ENCODE measurements at regions of chr22 and their contacts with region 1.

Region 1: DNA sequence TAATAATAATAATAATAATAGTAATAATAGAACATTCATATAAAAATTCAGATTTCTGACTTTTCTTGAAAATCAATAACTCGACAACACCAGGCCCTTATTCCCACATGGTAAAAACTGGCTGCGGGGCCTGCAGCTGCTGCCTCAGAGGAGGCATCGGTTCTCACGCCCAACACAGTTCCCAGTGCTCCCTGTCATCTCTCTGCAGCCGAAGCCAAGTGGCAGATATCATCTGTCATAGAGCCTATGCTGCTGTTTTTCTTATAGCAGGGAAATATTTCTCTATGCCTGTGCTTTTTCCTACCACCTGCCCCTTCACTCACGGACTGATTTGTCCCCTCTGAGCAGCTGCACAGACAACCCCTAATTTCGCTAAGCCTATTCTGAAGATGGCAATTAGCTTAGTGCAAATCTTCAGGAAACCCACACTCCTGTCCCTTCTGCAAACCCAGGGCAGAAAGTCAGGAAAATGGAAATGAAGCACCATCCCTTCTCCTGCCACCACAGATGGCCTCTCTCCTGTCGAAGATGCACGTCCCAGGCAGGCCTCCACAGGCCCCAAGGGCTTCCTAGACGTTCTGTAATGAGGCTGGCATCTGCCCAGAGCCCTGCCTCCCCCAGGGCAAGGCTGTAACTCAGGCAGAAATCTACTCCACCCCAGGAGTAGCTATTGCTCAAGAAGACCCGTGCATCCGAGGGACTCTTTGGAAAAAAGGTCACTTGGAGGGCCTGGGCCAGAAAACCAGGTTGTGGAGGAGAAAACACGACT is 66.6 kb downstream of the SYN3 start:
- DNase-seq: peak in 6 of 7 donors; percentile 31 to 67 (median 64)
- H3K4me3 ChIP-seq: no peak overlapping the region
- H3K27ac ChIP-seq: no peak overlapping the region
- H3K4me1 ChIP-seq: peaks cover 0 to 16% of the 10 kb centered on the region in 2 donors
- H3K27me3 ChIP-seq: no peaks in the 10 kb centered on the region
- CTCF ChIP-seq: no peak
- POLR2A ChIP-seq: no peak

Region 2: GRCh38 chr22:32528984-32529982 is 462.3 kb before region 1 on chr22:
- intact Hi-C with region 1: loop called in 1 of 2 experiments (anchors 10 kb)
- DNase-seq: peak; percentile 82 to 95 (median 90)
- H3K4me3 ChIP-seq: no peak overlapping the region
- H3K27ac ChIP-seq: peak overlapping the region in 4 of 5 donors; percentile 6 to 85 (median 34)
- H3K4me1 ChIP-seq: peaks cover 0 to 18% of the 10 kb centered on the region in 2 donors
- H3K27me3 ChIP-seq: no peaks in the 10 kb centered on the region
- CTCF ChIP-seq: peak; percentile 81 to 94 (median 88)
- POLR2A ChIP-seq: no peak

Region 3: DNA sequence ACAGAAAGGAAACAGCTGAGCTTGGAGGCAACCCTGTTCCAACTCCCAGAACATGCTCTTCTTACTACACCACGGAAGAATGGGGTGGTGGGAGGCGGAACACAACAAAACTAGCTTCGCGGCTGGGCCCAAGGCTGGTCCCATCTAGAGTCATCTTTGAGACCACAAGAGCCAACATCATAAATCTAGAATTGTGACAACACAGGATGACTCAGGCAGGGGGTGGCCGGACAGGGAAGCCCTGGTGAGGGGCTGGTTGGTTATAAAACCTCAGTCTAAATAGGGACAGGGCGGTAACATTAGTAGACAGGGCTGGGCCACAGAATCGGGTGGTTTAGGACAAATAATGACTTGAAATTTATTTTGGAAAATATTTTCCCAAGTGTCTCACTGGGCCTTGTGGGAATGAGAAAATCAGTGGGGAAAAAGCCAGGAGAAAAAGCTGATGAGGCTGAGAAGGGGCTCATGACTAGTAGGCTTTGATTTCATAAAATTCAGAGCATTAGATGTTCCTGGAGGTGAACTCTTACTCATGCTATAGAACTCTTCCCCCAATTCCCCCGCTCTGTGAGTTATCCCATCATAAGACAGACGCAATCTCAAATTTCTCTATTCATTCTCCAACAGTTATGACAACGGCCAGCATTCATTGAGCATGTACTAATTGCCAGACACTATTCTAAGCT is 341.9 kb before region 1 on chr22:
- intact Hi-C with region 1: loop called in 1 of 2 experiments (anchors 10 kb)
- DNase-seq: no peak
- H3K4me3 ChIP-seq: no peak overlapping the region
- H3K27ac ChIP-seq: peak overlapping the region in 1 of 5 donors; percentile 34
- H3K4me1 ChIP-seq: no peaks in the 10 kb centered on the region
- H3K27me3 ChIP-seq: no peaks in the 10 kb centered on the region
- CTCF ChIP-seq: no peak
- POLR2A ChIP-seq: no peak

Region 4: GRCh38 chr22:32695451-32695891 is 296.1 kb before region 1 on chr22:
- intact Hi-C with region 1: no loop called
- DNase-seq: no peak
- H3K4me3 ChIP-seq: no peak overlapping the region
- H3K27ac ChIP-seq: no peak overlapping the region
- H3K4me1 ChIP-seq: no peaks in the 10 kb centered on the region
- H3K27me3 ChIP-seq: no peaks in the 10 kb centered on the region
- CTCF ChIP-seq: no peak
- POLR2A ChIP-seq: no peak

Region 5: GRCh38 chr22:32796865-32797573 is 194.5 kb before region 1 on chr22:
- intact Hi-C with region 1: loop called (anchors 10 kb)
- DNase-seq: peak in 6 of 7 donors; percentile 62 to 83 (median 65)
- H3K4me3 ChIP-seq: no peak overlapping the region
- H3K27ac ChIP-seq: no peak overlapping the region
- H3K4me1 ChIP-seq: no peaks in the 10 kb centered on the region
- H3K27me3 ChIP-seq: no peaks in the 10 kb centered on the region
- CTCF ChIP-seq: peak; percentile 64 to 83 (median 80)
- POLR2A ChIP-seq: no peak

Region 6: DNA sequence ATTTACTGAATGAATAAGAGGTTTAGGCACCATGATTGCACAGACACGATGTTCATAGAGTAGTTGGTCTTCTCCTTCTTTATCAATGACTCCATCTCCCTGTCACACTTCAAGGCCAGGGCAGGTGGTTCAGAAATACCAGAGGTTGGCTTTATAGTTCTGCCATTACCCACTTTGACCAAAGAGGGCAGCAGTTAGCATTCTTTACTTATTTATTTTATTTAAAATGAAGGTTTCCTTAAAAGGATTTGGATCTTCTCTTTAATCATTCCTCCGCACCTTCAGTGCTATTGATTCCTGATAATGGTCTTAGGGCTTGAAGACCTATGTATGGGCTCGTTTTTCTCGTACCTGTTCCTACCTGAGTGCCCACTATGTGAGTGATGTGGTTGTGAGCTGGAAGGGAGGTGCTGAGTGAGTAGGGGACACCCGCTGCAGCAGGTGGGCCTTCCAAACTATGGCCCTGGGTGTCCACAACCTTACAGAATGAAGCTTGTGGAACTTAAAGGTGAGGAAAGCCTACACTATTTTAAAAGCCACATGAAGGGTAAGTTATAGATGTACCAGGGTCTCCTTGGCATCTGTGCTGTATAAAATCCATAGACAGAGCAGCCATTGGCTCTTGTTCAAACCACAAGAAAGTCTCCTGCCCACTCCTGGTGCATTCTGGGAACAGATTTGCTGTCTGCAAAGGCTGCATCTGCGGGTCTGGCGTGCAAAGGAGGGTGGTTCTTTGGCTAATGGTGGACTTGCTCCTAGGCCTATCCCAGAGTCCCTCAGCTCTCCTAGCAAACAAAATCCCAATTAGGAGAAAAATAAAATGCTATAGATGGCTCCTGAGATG is 155.0 kb before region 1 on chr22:
- intact Hi-C with region 1: loop called in 1 of 2 experiments (anchors 10 kb)
- DNase-seq: peak in 2 of 7 donors; percentile 47 to 51
- H3K4me3 ChIP-seq: no peak overlapping the region
- H3K27ac ChIP-seq: peak overlapping the region in 3 of 5 donors; percentile 49 to 92 (median 89)
- H3K4me1 ChIP-seq: peaks cover 24 to 99% of the 10 kb centered on the region in 2 donors
- H3K27me3 ChIP-seq: no peaks in the 10 kb centered on the region
- CTCF ChIP-seq: peak; percentile 41 to 62 (median 52)
- POLR2A ChIP-seq: no peak

Region 7: DNA sequence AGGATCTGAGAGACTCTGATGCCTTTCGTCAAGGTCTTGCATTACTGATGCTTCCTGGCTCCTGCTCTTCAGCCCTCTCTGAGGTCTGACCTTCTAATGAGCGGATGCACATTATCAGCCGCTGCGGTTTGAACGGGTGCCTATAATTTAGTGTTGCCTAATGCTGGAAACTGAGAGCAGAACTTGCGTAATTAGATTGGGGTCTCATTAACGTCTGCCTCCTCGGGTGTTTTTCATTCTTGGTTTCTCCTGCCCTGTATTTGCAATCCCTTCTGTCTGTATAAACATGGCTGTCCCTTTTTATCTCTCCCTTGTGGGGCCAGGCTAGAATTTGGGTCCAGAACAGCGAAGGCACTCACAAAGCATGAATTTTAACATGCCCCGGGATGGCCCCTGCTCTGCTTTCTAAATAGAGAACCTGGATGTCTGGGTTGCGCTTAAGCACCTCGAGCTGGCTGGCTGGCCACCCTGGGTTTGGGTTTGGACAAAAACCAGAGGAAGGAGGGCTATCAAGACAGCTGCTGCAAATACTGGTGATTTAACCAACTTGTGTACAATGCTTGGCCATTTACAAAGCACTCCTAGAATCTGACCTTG is 71.4 kb before region 1 on chr22:
- intact Hi-C with region 1: loop called in 1 of 2 experiments (anchors 5 kb)
- DNase-seq: peak; percentile 47 to 89 (median 76)
- H3K4me3 ChIP-seq: no peak overlapping the region
- H3K27ac ChIP-seq: peak overlapping the region in 3 of 5 donors; percentile 10 to 70 (median 69)
- H3K4me1 ChIP-seq: peaks cover 0 to 17% of the 10 kb centered on the region in 2 donors
- H3K27me3 ChIP-seq: no peaks in the 10 kb centered on the region
- CTCF ChIP-seq: no peak
- POLR2A ChIP-seq: no peak